ENCODE measurements at regions of chr20 and their contacts with region 1.

Region 1: GRCh38 chr20:59177261-59178250 is 13.9 kb downstream of the ZNF831 start:
- DNase-seq: no peak

Region 2: DNA sequence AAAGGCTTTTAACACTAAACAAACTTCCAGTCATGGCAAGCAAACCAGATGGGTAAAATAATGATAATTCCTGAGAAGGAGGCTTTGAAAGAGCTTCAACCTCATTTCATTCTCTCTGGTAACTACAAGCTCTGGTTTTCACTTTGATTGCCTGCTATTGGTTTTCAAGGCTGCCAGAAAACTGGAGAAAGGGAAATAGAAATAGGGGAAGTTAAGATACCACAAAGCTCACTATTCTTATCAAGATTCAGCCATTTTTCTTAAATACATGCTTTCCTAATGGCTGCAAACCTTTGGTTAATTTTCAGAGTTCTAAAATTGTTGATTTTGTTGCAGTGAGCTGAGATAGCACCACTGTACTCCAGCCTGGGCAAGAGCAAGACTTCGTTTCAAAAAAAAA is 239.0 kb before region 1 on chr20:
- in situ Hi-C with region 1: no loop called
- DNase-seq: no peak

Region 3: GRCh38 chr20:59122062-59122919 is 55.3 kb before region 1 on chr20:
- in situ Hi-C with region 1: no loop called
- DNase-seq: no peak

Region 4: GRCh38 chr20:59403261-59403961 is 225.9 kb after region 1 on chr20:
- in situ Hi-C with region 1: loop called (anchors 10 kb)
- DNase-seq: peak; percentile 43